ENCODE measurements at regions of chr6 and their contacts with region 1.

Region 1: GRCh38 chr6:90285611-90286381 is 10.8 kb downstream of the BACH2 start:
- DNase-seq: peak; percentile 71
- ATAC-seq: peak; percentile 88
- H3K4me3 ChIP-seq: peak overlapping the region; percentile 19; the same call in 1 of the 2 replicates
- H3K27ac ChIP-seq: peak overlapping the region; percentile 68; the same call in 1 of the 2 replicates
- H3K4me1 ChIP-seq: peaks cover 24% of the 10 kb centered on the region
- H3K27me3 ChIP-seq: peaks cover 0 to 3% of the 10 kb centered on the region in 2 experiments; a peak in 1 of 4 replicates
- CTCF ChIP-seq: no peak
- EP300 ChIP-seq: peak; percentile 34 to 70; a peak in 3 of 4 replicates
- POLR2A ChIP-seq: no peak
- RAD21 ChIP-seq: no peak

Region 2: GRCh38 chr6:89829591-89830385 is 456.0 kb before region 1 on chr6 and contains the start of gene CASP8AP2:
- CTCF ChIA-PET with region 1: no interaction called
- POLR2A ChIA-PET with region 1: no interaction called
- RAD21 ChIA-PET with region 1: no interaction called
- SMC1A ChIA-PET with region 1: no interaction called
- in situ Hi-C with region 1: loop called (anchors 10 kb)
- intact Hi-C with region 1: no loop called
- DNase-seq: peak; percentile 98
- ATAC-seq: peak; percentile 97
- H3K4me3 ChIP-seq: peak within 1 kb of the TSS; percentile 87
- H3K27ac ChIP-seq: peak within 1 kb of the TSS; percentile 85
- H3K4me1 ChIP-seq: peaks cover 14% of the 10 kb centered on the region
- H3K27me3 ChIP-seq: no peaks in the 10 kb centered on the region
- CTCF ChIP-seq: no peak
- EP300 ChIP-seq: no peak
- POLR2A ChIP-seq: peak; percentile 90
- RAD21 ChIP-seq: no peak
- polyA plus RNA-seq, gene CASP8AP2: 12.1 to 15.5 TPM

Region 3: DNA sequence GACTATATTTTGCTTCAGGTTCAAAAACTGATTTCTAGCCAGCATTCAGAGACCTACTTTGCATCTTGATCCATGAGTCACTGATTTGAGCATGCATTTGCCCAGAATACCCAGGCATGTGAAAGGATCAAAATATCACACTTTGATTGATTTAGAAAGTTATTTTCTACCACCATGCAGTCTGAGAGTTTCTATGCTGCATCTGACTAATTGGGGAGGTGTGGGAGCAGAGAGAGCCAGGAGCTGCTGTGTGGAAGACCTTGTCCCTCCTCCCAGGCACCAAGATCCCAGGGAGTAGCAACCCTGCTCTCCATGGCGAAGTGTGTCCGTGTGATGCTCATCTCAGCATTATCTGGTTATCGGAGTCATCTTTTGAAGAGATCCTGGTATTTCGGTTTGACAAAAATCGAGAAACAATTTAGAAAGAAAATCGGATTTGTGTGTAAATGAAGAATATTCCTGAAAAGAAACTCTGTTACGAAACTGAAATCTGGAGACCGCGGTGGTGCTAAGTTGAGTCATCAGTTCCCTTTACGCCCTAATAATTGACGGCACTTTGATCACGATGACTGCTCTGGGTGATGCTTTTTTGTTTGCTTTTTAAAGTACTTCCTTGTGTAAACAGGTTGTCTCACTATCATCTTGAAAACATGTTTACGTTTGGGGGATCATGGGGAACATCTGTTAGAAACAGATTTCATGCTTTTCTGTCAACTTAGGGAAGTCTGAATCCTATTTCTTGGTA is 182.6 kb before region 1 on chr6:
- CTCF ChIA-PET with region 1: no interaction called
- POLR2A ChIA-PET with region 1: no interaction called
- RAD21 ChIA-PET with region 1: no interaction called
- SMC1A ChIA-PET with region 1: no interaction called
- in situ Hi-C with region 1: loop called (anchors 5 kb)
- intact Hi-C with region 1: loop called (anchors 5 kb)
- DNase-seq: peak; percentile 65
- ATAC-seq: peak; percentile 86
- H3K4me3 ChIP-seq: no peak overlapping the region
- H3K27ac ChIP-seq: no peak overlapping the region
- H3K4me1 ChIP-seq: peaks cover 14% of the 10 kb centered on the region
- H3K27me3 ChIP-seq: peaks cover 0 to 4% of the 10 kb centered on the region in 2 experiments; a peak in 1 of 4 replicates
- CTCF ChIP-seq: no peak
- EP300 ChIP-seq: peak; percentile 75 to 88
- POLR2A ChIP-seq: no peak
- RAD21 ChIP-seq: no peak

Region 4: GRCh38 chr6:90369024-90369519 is 83.3 kb after region 1 on chr6:
- CTCF ChIA-PET with region 1: no interaction called
- POLR2A ChIA-PET with region 1: no interaction called
- RAD21 ChIA-PET with region 1: interaction called, 5 read pairs
- SMC1A ChIA-PET with region 1: interaction called, 3 read pairs
- in situ Hi-C with region 1: no loop called
- intact Hi-C with region 1: loop called (anchors 2 kb)
- DNase-seq: peak; percentile 90
- ATAC-seq: peak; percentile 99
- H3K4me3 ChIP-seq: no peak overlapping the region
- H3K27ac ChIP-seq: no peak overlapping the region
- H3K4me1 ChIP-seq: peaks cover 13% of the 10 kb centered on the region
- H3K27me3 ChIP-seq: peaks cover 0 to 3% of the 10 kb centered on the region in 2 experiments; a peak in 2 of 4 replicates
- CTCF ChIP-seq: no peak
- EP300 ChIP-seq: peak; percentile 87 to 94
- POLR2A ChIP-seq: no peak
- RAD21 ChIP-seq: no peak

Region 5: GRCh38 chr6:90393232-90393884 is 107.6 kb after region 1 on chr6:
- CTCF ChIA-PET with region 1: interaction called, 20 read pairs
- POLR2A ChIA-PET with region 1: no interaction called
- RAD21 ChIA-PET with region 1: interaction called, 4 read pairs
- SMC1A ChIA-PET with region 1: interaction called, 8 read pairs
- in situ Hi-C with region 1: no loop called
- intact Hi-C with region 1: loop called (anchors 5 kb)
- DNase-seq: no peak
- ATAC-seq: peak; percentile 87
- H3K4me3 ChIP-seq: no peak overlapping the region
- H3K27ac ChIP-seq: no peak overlapping the region
- H3K4me1 ChIP-seq: no peaks in the 10 kb centered on the region
- H3K27me3 ChIP-seq: peaks cover 0 to 7% of the 10 kb centered on the region in 2 experiments; a peak in 2 of 4 replicates
- CTCF ChIP-seq: peak; percentile 65 to 78 (median 68)
- EP300 ChIP-seq: no peak
- POLR2A ChIP-seq: no peak
- RAD21 ChIP-seq: peak; percentile 75

Region 6: DNA sequence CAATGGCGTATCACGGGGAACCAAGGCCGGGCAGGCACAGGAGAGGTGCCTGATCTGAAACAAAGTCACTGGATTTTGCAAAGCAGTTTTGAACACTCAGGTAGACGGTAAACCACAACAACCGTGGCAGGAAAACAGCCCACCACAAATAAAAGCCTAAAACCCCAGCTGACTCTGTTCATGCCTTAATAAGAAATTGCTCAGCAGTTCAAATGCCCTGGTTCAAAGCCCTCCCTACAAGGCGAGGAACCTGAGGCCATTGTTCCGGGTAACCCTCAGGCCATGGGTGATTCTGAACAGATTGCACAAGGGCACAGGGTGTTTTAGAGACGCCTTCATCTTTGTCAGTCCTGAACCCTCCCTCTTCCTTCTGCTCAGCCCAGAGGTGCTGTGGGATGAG is 186.9 kb after region 1 on chr6:
- CTCF ChIA-PET with region 1: interaction called, 64 read pairs
- POLR2A ChIA-PET with region 1: interaction called, 3 read pairs
- RAD21 ChIA-PET with region 1: interaction called, 13 read pairs
- SMC1A ChIA-PET with region 1: interaction called, 38 read pairs
- in situ Hi-C with region 1: loop called (anchors 5 kb)
- intact Hi-C with region 1: loop called (anchors 1 kb)
- DNase-seq: no peak
- ATAC-seq: peak; percentile 7; the same call in 1 of the 3 replicates
- H3K4me3 ChIP-seq: no peak overlapping the region
- H3K27ac ChIP-seq: no peak overlapping the region
- H3K4me1 ChIP-seq: peaks cover 16% of the 10 kb centered on the region
- H3K27me3 ChIP-seq: no peaks in the 10 kb centered on the region; a peak in 1 of 4 replicates
- CTCF ChIP-seq: no peak
- EP300 ChIP-seq: no peak
- POLR2A ChIP-seq: no peak
- RAD21 ChIP-seq: no peak

Measured in GM12878 (cell line).